A673 (cell line): ENCODE measurements at regions of chr15 and their contacts with region 1.

Region 1: GRCh38 chr15:70608144-70608543 is 155.2 kb downstream of the UACA start:
- DNase-seq: no peak
- H3K4me3 ChIP-seq: no peak overlapping the region
- H3K27ac ChIP-seq: no peak overlapping the region
- H3K4me1 ChIP-seq: peaks cover 17% of the 10 kb centered on the region
- H3K27me3 ChIP-seq: no peaks in the 10 kb centered on the region
- CTCF ChIP-seq: no peak

Region 2: GRCh38 chr15:70596354-70597055 is 11.6 kb before region 1 on chr15:
- CTCF ChIA-PET with region 1: no interaction called
- POLR2A ChIA-PET with region 1: interaction called, 13 read pairs
- intact Hi-C with region 1: no loop called
- DNase-seq: no peak
- H3K4me3 ChIP-seq: no peak overlapping the region
- H3K27ac ChIP-seq: no peak overlapping the region
- H3K4me1 ChIP-seq: no peaks in the 10 kb centered on the region
- H3K27me3 ChIP-seq: no peaks in the 10 kb centered on the region
- CTCF ChIP-seq: no peak